Activated CD4-positive, alpha-beta T cell treated with anti-CD3 and anti-CD28 coated beads for 36 hours (primary cell): ENCODE measurements at regions of chr2 and their contacts with region 1.

Region 1: GRCh38 chr2:200585730-200586643 is at the start of gene AOX1:
- DNase-seq: peak; percentile 34
- ATAC-seq: peak; percentile 66
- H3K4me3 Mint-ChIP-seq: peak within 1 kb of the TSS; percentile 65
- H3K27ac Mint-ChIP-seq: no peak within 1 kb of the TSS
- H3K4me1 Mint-ChIP-seq: peaks cover 5% of the 10 kb centered on the region
- H3K27me3 Mint-ChIP-seq: peaks cover 6% of the 10 kb centered on the region
- total RNA-seq, gene AOX1: 0.65 to 0.82 TPM

Region 2: DNA sequence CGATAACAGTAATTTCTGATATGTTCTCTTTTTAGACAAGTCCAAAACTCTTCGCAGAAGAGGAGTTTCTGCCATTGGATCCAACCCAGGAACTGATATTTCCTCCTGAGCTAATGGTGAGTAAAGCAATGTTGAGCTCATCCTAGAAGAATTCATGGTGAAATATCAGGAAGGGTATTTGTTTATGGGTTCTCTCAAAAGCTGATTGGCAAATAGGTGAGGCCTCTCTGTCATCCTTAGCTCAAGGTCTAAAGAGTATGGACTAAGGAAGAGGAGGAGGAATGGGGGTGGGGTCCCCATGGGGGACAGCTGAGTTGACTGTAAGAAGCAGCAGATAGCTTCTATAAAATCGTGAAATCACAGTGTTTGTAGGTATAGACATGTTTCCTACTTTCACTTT is 18.0 kb after region 1 on chr2:
- CTCF ChIA-PET with region 1: interaction called, 3 read pairs
- POLR2A ChIA-PET with region 1: interaction called, 15 read pairs
- intact Hi-C with region 1: no loop called
- DNase-seq: no peak
- ATAC-seq: no peak
- H3K4me3 Mint-ChIP-seq: no peak overlapping the region
- H3K27ac Mint-ChIP-seq: no peak overlapping the region
- H3K4me1 Mint-ChIP-seq: no peaks in the 10 kb centered on the region
- H3K27me3 Mint-ChIP-seq: peaks cover 7% of the 10 kb centered on the region